ENCODE measurements at regions of chr5 and their contacts with region 1.

Region 1: GRCh38 chr5:78467752-78468357 is 107.4 kb downstream of the SCAMP1 start:
- DNase-seq: peak; percentile 3
- ATAC-seq: peak; percentile 91
- H3K4me3 ChIP-seq: no peak overlapping the region
- H3K27ac ChIP-seq: no peak overlapping the region
- H3K4me1 ChIP-seq: no peaks in the 10 kb centered on the region
- H3K27me3 ChIP-seq: no peaks in the 10 kb centered on the region
- CTCF ChIP-seq: peak; percentile 55 to 76 (median 64)
- EP300 ChIP-seq: no peak
- POLR2A ChIP-seq: no peak
- RAD21 ChIP-seq: peak; percentile 76

Region 2: DNA sequence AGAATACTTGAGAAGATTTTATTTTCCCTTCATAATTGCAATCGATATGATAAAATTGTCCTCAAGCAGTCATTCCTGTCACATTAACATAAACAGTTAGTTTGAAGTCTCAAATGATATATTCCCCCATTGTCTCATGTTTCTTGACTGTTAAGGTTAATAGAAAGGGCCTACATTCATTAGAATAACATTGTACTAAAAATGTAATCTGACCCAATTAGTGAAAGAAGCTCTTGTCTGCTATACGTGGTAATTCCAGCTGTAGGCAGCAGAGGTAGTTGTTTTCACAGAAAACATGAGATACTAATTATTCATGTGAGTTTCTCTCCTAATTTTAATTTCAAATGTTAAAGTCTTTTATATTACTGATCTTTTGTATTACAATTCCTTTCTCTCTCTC is 147.5 kb before region 1 on chr5:
- CTCF ChIA-PET with region 1: interaction called, 11 read pairs
- POLR2A ChIA-PET with region 1: no interaction called
- RAD21 ChIA-PET with region 1: interaction called, 13 read pairs
- SMC1A ChIA-PET with region 1: interaction called, 7 read pairs
- in situ Hi-C with region 1: no loop called
- intact Hi-C with region 1: loop called (anchors 5 kb)
- DNase-seq: no peak
- ATAC-seq: peak; percentile 66
- H3K4me3 ChIP-seq: no peak overlapping the region
- H3K27ac ChIP-seq: no peak overlapping the region
- H3K4me1 ChIP-seq: no peaks in the 10 kb centered on the region
- H3K27me3 ChIP-seq: no peaks in the 10 kb centered on the region
- CTCF ChIP-seq: peak; percentile 54 to 67 (median 56); a peak in 5 of 6 replicates
- EP300 ChIP-seq: no peak
- POLR2A ChIP-seq: no peak
- RAD21 ChIP-seq: peak; percentile 68

Region 3: DNA sequence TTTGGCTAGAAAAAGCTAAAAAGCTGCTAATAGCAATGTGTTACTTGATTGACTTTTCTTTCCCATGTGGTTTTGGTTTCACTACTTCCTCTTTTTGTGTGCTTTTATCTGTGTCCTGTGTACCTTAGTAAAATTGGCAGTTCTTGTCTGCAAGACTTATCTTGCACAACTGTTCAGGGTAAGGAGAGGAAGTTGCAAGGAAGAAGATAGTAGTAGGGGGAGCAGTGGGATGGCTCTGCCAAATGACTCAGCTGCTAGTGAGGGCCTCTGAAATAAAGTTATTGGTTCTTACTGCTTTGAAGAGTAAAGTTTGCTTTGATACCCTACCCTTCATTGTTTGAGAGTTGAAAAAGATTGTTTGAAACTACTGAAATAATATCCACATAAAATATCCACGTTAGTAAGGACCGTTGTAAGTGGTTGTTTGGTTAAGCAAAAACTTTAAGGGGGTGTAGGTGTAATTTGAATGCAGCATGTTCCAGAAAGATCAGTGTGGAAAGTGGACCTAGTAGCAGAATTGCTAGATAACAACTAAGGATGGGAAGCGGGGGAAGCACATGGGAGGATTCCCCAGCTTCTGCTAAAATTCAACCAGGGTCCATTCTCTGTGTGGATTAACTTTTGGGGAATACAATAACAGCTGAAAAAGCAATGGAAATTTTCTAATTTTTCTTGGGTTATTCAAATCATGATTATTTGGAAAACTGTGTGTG is 16.1 kb after region 1 on chr5:
- CTCF ChIA-PET with region 1: interaction called, 15 read pairs
- POLR2A ChIA-PET with region 1: no interaction called
- RAD21 ChIA-PET with region 1: interaction called, 13 read pairs
- SMC1A ChIA-PET with region 1: interaction called, 14 read pairs
- in situ Hi-C with region 1: no loop called
- intact Hi-C with region 1: no loop called
- DNase-seq: peak; percentile 69
- ATAC-seq: peak; percentile 97
- H3K4me3 ChIP-seq: no peak overlapping the region
- H3K27ac ChIP-seq: peak overlapping the region; percentile 28; the same call in 1 of the 2 replicates
- H3K4me1 ChIP-seq: peaks cover 15% of the 10 kb centered on the region
- H3K27me3 ChIP-seq: no peaks in the 10 kb centered on the region
- CTCF ChIP-seq: no peak
- EP300 ChIP-seq: 0 out of 4 replicates have a peak, but pooled peaks of 1 of the 2 experiments have one; percentile 24
- POLR2A ChIP-seq: no peak
- RAD21 ChIP-seq: no peak

Region 4: GRCh38 chr5:78537821-78538220 is 70.0 kb after region 1 on chr5:
- CTCF ChIA-PET with region 1: interaction called, 42 read pairs
- POLR2A ChIA-PET with region 1: interaction called, 3 read pairs
- RAD21 ChIA-PET with region 1: interaction called, 18 read pairs
- SMC1A ChIA-PET with region 1: interaction called, 12 read pairs
- in situ Hi-C with region 1: no loop called
- intact Hi-C with region 1: no loop called
- DNase-seq: no peak
- ATAC-seq: peak; percentile 84
- H3K4me3 ChIP-seq: no peak overlapping the region
- H3K27ac ChIP-seq: no peak overlapping the region
- H3K4me1 ChIP-seq: peaks cover 5% of the 10 kb centered on the region
- H3K27me3 ChIP-seq: no peaks in the 10 kb centered on the region
- CTCF ChIP-seq: peak; percentile 42 to 73 (median 57)
- EP300 ChIP-seq: no peak
- POLR2A ChIP-seq: no peak
- RAD21 ChIP-seq: peak; percentile 83

Region 5: GRCh38 chr5:78886341-78887230 is 418.7 kb after region 1 on chr5:
- CTCF ChIA-PET with region 1: interaction called, 4 read pairs
- POLR2A ChIA-PET with region 1: no interaction called
- RAD21 ChIA-PET with region 1: no interaction called
- SMC1A ChIA-PET with region 1: interaction called, 4 read pairs
- in situ Hi-C with region 1: no loop called
- intact Hi-C with region 1: loop called (anchors 5 kb)
- DNase-seq: no peak
- ATAC-seq: peak; percentile 25
- H3K4me3 ChIP-seq: no peak overlapping the region
- H3K27ac ChIP-seq: no peak overlapping the region
- H3K4me1 ChIP-seq: peaks cover 21% of the 10 kb centered on the region
- H3K27me3 ChIP-seq: no peaks in the 10 kb centered on the region; a peak in 1 of 4 replicates
- CTCF ChIP-seq: peak; percentile 37 to 52 (median 38); a peak in 5 of 6 replicates
- EP300 ChIP-seq: no peak
- POLR2A ChIP-seq: no peak
- RAD21 ChIP-seq: peak; percentile 51